Colonic mucosa (tissue), 4 donors: ENCODE measurements at regions of chr19 and their contacts with region 1.

Region 1: DNA sequence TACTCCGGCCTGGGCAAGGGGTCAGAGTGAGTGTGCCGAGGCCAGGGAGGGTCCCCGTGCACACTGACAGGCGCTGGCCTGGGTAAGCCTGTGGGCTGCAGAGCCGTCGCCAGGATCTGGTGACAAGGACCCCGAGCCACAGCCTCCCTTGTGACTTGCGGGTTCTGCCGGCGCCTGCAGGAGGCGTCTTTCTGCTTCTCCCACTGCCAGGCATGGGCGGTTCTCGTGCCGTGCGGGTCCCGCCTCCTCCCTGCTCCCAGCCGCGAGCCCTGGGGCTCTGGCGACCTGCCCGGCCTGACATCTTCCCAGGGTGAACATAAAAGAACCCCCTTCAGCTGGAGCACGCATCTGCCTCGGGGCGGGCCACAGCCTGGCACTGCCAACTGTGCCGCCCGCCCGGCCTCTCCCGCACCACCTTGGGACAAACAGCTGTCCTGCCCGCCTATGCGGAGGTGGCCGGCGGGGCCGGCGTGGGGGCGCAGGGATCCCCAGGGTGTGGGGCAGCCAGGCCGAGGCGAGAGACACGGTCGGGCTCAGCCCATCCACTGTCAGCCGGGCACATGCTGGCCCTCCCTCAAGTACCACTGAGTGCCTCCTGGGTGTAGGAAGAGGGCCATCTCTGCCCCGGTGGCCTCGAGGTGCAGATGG is 1.5 kb upstream of the HCN2 start:
- DNase-seq: peak; percentile 67
- H3K4me3 ChIP-seq: no peak overlapping the region
- H3K27ac ChIP-seq: no peak overlapping the region
- H3K4me1 ChIP-seq: peaks cover 4% of the 10 kb centered on the region
- H3K27me3 ChIP-seq: peaks cover 36% of the 10 kb centered on the region
- CTCF ChIP-seq: peak; percentile 49

Region 2: GRCh38 chr19:367963-368629 is 220.1 kb before region 1 on chr19:
- intact Hi-C with region 1: no loop called
- DNase-seq: no peak
- H3K4me3 ChIP-seq: no peak overlapping the region
- H3K27ac ChIP-seq: no peak overlapping the region
- H3K4me1 ChIP-seq: no peaks in the 10 kb centered on the region
- H3K27me3 ChIP-seq: no peaks in the 10 kb centered on the region
- CTCF ChIP-seq: no peak

Region 3: GRCh38 chr19:662962-663681 is 74.9 kb after region 1 on chr19 and contains the start of gene RNF126:
- intact Hi-C with region 1: loop called (anchors 10 kb)
- DNase-seq: peak; percentile 94
- H3K4me3 ChIP-seq: peak within 1 kb of the TSS; percentile 100
- H3K27ac ChIP-seq: peak within 1 kb of the TSS; percentile 89
- H3K4me1 ChIP-seq: peaks cover 34% of the 10 kb centered on the region
- H3K27me3 ChIP-seq: no peaks in the 10 kb centered on the region
- CTCF ChIP-seq: no peak
- total RNA-seq, gene RNF126: 54.6 to 74.7 TPM